ENCODE measurements at regions of chr20 and their contacts with region 1.

Region 1: DNA sequence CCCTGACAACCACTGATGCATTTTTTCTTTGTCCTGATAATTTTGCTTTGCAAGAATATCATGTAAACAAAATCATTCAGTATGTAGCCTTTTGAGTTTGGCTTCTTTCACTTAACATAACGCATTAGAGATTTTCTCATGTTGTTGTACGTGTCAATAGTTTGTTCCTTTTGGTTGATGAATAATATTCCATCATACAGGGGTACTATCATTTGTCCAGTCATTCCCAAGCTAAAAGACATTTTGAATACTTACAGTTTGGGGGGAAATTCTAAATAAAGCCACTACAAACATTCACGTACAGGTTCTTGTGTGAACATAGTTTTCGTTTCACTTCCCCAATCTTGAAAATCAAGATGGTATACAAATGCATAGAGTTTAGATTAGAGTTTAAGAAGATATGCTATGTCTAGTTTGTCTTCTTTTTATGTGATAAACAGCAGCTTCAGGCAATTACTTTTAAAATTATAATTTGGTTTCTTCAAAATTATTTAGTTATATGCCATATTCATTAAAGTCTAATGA is 5.2 kb downstream of the HAO1 start:
- DNase-seq: no peak
- ATAC-seq: no peak
- H3K4me3 Mint-ChIP-seq: no peak overlapping the region
- H3K27ac Mint-ChIP-seq: no peak overlapping the region
- H3K4me1 Mint-ChIP-seq: peaks cover 4% of the 10 kb centered on the region; the same call in 1 of the 2 replicates
- H3K27me3 Mint-ChIP-seq: no peaks in the 10 kb centered on the region
- CTCF ChIP-seq: no peak

Region 2: DNA sequence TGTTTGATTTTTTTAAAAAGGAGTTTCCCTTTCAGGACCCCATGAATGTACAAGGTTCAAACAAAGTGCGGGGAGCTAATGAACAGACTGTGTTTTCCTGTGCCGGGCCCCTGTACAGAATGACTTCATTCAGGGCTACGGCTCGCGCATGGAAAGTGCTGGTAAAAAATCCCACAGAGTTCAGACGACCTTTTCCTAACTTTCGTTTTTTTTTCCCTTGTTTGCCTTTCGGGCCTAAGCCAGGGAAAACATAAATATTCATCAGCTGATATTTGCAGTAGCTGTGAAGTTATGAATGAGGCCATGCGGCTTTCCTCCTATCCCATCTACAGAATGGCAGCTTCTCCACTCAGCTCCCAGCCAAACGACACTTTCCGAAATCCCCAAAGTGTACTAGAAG is 68.8 kb before region 1 on chr20:
- CTCF ChIA-PET with region 1: no interaction called
- POLR2A ChIA-PET with region 1: interaction called, 11 read pairs
- DNase-seq: no peak
- ATAC-seq: no peak
- H3K4me3 Mint-ChIP-seq: no peak overlapping the region
- H3K27ac Mint-ChIP-seq: no peak overlapping the region
- H3K4me1 Mint-ChIP-seq: peaks cover 3% of the 10 kb centered on the region; the same call in 1 of the 2 replicates
- H3K27me3 Mint-ChIP-seq: no peaks in the 10 kb centered on the region
- CTCF ChIP-seq: no peak

Region 3: GRCh38 chr20:7980332-7981046 is 45.4 kb after region 1 on chr20:
- CTCF ChIA-PET with region 1: interaction called, 25 read pairs
- POLR2A ChIA-PET with region 1: no interaction called
- DNase-seq: peak; percentile 17
- ATAC-seq: peak; percentile 46; the same call in 1 of the 2 replicates
- H3K4me3 Mint-ChIP-seq: no peak overlapping the region; the same call in 1 of the 2 replicates
- H3K27ac Mint-ChIP-seq: no peak overlapping the region
- H3K4me1 Mint-ChIP-seq: peaks cover 22% of the 10 kb centered on the region
- H3K27me3 Mint-ChIP-seq: peaks cover 28% of the 10 kb centered on the region
- CTCF ChIP-seq: 0 out of 2 replicates have a peak, but pooled peaks have one; percentile 41

Region 4: GRCh38 chr20:7989379-7989778 is 54.3 kb after region 1 on chr20:
- CTCF ChIA-PET with region 1: interaction called, 25 read pairs
- POLR2A ChIA-PET with region 1: no interaction called
- DNase-seq: no peak
- ATAC-seq: no peak
- H3K4me3 Mint-ChIP-seq: no peak overlapping the region
- H3K27ac Mint-ChIP-seq: no peak overlapping the region
- H3K4me1 Mint-ChIP-seq: peaks cover 6% of the 10 kb centered on the region
- H3K27me3 Mint-ChIP-seq: peaks cover 11% of the 10 kb centered on the region
- CTCF ChIP-seq: no peak